A673 (cell line): ENCODE measurements at regions of chr12 and their contacts with region 1.

Region 1: GRCh38 chr12:51520576-51521325 is 70.3 kb upstream of the SCN8A start:
- DNase-seq: no peak
- H3K4me3 ChIP-seq: no peak overlapping the region
- H3K27ac ChIP-seq: no peak overlapping the region
- H3K4me1 ChIP-seq: no peaks in the 10 kb centered on the region
- H3K27me3 ChIP-seq: no peaks in the 10 kb centered on the region
- CTCF ChIP-seq: 0 out of 2 replicates have a peak, but pooled peaks have one; percentile 13

Region 2: DNA sequence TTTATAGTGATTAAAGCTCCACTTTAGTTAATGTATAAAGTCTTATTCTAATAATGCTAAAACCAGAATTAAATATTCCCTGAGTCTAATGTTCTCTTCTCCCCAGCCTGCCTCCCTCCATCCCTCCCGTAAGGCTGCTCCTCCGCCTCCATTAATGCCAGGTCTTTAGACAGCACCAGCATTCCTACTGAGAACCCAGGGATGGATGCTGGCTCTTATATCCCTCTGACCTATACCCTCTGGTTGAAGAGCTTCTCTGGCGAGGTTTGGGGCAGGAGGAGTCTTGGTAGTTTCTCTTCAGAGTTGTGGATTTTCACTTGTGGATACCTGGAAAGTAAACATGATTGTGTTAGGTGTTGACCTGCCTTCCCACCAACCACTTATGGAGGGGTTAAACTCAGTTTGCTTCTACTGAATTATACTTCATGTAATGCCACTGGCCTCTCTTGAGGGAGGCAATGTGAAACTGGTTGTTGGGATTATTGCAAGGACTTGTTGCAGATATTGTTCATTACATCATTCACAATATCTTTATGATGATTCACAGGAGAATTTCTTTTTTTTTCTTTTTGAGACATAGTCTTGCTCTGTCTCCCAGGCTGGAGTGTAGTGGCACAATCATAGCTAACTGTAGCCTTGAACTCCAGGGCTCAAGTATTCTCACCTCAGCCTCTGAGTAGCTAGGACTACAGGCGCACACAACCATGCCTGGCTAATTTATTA is 239.4 kb before region 1 on chr12:
- CTCF ChIA-PET with region 1: interaction called, 12 read pairs
- POLR2A ChIA-PET with region 1: no interaction called
- intact Hi-C with region 1: no loop called
- DNase-seq: no peak
- H3K4me3 ChIP-seq: no peak overlapping the region
- H3K27ac ChIP-seq: no peak overlapping the region
- H3K4me1 ChIP-seq: no peaks in the 10 kb centered on the region
- H3K27me3 ChIP-seq: no peaks in the 10 kb centered on the region
- CTCF ChIP-seq: no peak

Region 3: GRCh38 chr12:51505360-51506105 is 15.2 kb before region 1 on chr12:
- CTCF ChIA-PET with region 1: interaction called, 11 read pairs
- POLR2A ChIA-PET with region 1: no interaction called
- intact Hi-C with region 1: no loop called
- DNase-seq: no peak
- H3K4me3 ChIP-seq: no peak overlapping the region
- H3K27ac ChIP-seq: no peak overlapping the region
- H3K4me1 ChIP-seq: no peaks in the 10 kb centered on the region
- H3K27me3 ChIP-seq: no peaks in the 10 kb centered on the region
- CTCF ChIP-seq: no peak